ENCODE measurements at regions of chr6 and their contacts with region 1.

Region 1: GRCh38 chr6:43687437-43688347 is at the start of gene MRPS18A:
- DNase-seq: peak; percentile 85 to 88 (median 86)
- ATAC-seq: peak; percentile 87 to 97 (median 96)
- H3K4me3 ChIP-seq: peak within 1 kb of the TSS; percentile 69 to 97 (median 86)
- H3K27ac ChIP-seq: peak within 1 kb of the TSS; percentile 33 to 88 (median 82)
- H3K4me1 ChIP-seq: peaks cover 6 to 49% (median 29%) of the 10 kb centered on the region in 12 donors
- H3K27me3 ChIP-seq: no peaks in the 10 kb centered on the region
- CTCF ChIP-seq: peak in 1 of 12 donors; percentile 16
- POLR2A ChIP-seq: peak in 1 of 2 donors; percentile 35
- total RNA-seq, gene MRPS18A: 37.4 to 66.1 (median 39.1) TPM

Region 2: DNA sequence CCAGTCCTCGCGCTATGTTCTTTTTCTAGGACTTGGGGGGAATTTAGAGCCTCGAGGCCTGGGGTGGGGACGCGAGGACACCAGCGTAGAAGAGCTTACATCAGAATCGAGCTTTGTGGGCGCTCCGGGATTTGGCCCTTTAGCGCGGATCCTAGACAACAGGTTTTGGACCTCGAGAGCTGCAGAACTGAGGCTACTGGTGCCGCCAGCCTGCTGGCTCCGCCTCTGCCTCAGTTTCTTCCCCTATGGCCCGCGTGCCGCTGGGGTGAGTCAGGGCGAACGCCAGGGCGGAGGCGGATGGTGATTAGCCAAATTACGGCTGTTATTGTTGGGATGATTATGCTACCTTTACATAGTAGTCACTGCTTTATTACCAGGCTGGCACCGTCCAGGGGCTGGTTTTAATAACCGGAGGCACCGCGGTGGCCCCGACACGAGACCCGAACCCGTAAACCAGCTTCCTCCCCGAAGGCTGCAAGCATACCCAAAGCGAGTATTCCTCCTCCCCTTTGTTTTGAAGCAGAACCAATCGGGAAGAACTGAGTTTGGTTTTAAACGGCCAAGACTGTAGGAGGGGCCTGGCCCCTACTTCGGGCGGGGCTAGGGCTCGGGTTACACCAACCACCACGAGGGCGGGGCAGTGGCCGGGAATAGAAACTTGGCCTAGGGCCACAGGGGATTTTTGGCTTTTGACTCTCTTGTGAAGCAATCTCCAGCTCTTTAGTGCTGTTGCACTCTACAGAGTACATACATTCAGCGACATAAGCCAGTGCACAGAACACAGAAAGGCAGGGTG is 58.0 kb before region 1 on chr6:
- intact Hi-C with region 1: no loop called
- DNase-seq: peak; percentile 95 to 97 (median 96)
- ATAC-seq: peak; percentile 87 to 93 (median 89)
- H3K4me3 ChIP-seq: peak overlapping the region; percentile 66 to 97 (median 84)
- H3K27ac ChIP-seq: peak overlapping the region; percentile 89 to 100 (median 98)
- H3K4me1 ChIP-seq: peaks cover 3 to 34% (median 26%) of the 10 kb centered on the region in 12 donors
- H3K27me3 ChIP-seq: no peaks in the 10 kb centered on the region
- CTCF ChIP-seq: no peak
- POLR2A ChIP-seq: peak; percentile 87 to 96

Region 3: DNA sequence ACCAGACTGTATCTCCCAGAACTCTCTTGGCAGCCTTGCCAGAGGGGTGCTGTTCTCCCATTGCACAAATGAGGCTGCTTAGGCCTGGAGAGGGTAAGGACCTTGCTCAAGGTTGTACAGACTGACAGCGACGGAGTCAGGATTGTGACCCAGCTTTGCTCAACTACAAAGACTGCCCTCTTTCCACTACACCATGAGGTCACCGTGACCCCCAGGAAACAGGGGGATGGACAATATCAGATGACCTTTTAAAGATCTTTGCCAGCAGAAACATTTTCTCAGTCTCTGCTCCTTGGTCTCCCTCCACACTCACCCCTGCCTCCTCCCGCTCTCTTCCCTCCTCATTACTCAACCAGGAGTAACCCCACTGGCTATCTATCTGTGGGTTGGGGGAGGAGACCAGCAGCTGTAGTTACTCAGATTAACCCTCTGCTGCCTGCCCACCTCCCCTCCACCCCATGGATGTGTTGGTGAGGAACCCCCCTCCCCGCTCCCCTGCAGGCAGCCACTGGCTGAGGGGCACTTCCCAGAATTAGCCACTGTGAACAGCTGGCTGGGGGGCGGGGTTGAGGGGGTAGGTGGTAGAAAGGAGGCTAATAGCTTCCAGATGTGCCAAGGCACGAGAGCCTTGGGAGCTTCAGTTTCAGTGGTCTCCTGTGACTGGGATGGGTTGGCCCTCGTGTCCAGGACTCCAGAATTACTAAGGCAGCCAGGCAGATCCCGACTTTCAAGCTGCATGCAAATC is 26.8 kb after region 1 on chr6:
- intact Hi-C with region 1: loop called in 2 of 10 experiments (anchors 1 to 5 kb)
- DNase-seq: peak in 2 of 5 donors; percentile 51 to 69
- ATAC-seq: peak in 2 of 4 donors; percentile 12 to 19
- H3K4me3 ChIP-seq: no peak overlapping the region
- H3K27ac ChIP-seq: peak overlapping the region in 6 of 12 donors; percentile 22 to 86 (median 34)
- H3K4me1 ChIP-seq: peaks cover 3 to 59% (median 28%) of the 10 kb centered on the region in 12 donors
- H3K27me3 ChIP-seq: no peaks in the 10 kb centered on the region
- CTCF ChIP-seq: no peak
- POLR2A ChIP-seq: no peak

Region 4: DNA sequence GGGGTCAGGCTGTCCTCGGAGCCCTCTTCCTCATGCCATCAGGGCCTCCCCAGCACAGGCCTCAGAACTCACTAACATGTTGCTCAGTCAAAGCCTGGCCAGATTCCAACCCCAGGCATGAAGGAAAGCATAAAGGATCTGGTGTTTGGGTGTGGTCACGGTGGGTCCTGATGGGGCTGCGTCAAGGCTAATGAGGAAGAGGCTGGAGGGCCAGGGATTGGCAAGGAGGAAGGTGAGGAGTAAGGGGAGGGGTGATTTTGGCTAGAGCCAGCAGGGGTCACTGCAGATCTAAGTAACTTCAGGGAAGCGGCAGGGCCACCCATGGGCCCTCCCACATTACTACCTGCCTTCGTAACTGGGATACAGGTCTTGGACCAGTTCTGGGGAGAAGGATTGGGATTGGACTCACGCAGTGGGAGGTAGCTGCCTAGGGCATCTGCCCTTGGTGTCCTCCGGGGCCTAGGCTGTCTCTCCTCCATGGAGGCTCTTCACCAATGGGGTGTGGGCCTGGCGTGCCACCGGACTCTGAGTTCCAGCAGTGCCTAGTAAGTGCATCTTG is 36.1 kb after region 1 on chr6:
- intact Hi-C with region 1: loop called in 2 of 10 experiments (anchors 2 to 5 kb)
- DNase-seq: peak; percentile 60 to 72 (median 66)
- ATAC-seq: peak; percentile 66 to 88 (median 81)
- H3K4me3 ChIP-seq: no peak overlapping the region
- H3K27ac ChIP-seq: no peak overlapping the region
- H3K4me1 ChIP-seq: peaks cover 3 to 21% (median 6%) of the 10 kb centered on the region in 12 donors
- H3K27me3 ChIP-seq: no peaks in the 10 kb centered on the region
- CTCF ChIP-seq: peak; percentile 46 to 72 (median 58)
- POLR2A ChIP-seq: no peak